ENCODE measurements at regions of chr2 and their contacts with region 1.

Region 1: DNA sequence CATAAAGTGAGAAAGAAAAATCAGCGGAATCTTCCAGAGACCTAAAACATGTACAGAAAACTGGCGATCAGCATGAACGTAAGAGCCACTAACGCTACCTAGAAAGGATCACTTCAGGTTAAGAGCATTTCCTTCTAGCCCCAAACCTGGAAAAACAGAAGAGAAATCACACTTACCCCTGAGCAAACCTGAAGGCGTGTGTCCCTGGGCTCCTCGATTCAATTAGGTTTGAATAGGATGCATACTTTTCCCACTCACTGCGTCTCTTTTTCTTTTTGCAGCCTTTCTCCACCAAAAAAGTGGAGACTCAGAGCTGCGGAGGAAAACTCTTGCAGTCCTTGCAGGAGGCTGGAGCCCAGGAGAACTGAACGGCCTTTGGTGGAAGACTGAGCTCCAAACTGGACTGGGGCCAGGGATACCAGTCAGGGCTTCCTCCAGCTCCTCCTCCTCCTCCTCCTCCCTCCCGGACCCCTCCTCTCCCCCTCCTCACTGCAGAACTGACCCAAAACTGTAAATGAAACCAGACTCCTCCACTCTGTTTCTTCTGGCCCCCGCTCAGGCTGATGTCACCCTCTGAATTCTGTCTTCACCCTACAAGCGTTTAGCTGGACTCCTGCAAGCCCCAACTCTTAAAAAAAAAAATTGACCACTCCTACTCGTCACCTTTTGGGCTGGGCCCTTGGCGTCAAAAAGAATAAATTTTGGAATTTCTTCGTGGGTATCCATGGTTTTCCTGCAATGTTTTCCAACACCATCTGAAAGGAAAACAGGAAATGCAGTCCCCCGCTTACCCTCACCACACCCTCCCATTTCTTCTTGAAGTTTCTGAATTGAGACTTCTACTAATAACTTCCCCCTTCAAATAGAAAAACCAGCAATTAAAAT is at the start of gene COL6A3:
- DNase-seq: no peak
- H3K4me3 Mint-ChIP-seq: no peak within 1 kb of the TSS
- H3K27ac Mint-ChIP-seq: no peak within 1 kb of the TSS
- H3K4me1 Mint-ChIP-seq: no peaks in the 10 kb centered on the region
- H3K27me3 Mint-ChIP-seq: peaks cover 83% of the 10 kb centered on the region
- CTCF ChIP-seq: no peak
- total RNA-seq, gene COL6A3: 0.07 TPM in 1 of 2 replicates, not detected in the other

Region 2: DNA sequence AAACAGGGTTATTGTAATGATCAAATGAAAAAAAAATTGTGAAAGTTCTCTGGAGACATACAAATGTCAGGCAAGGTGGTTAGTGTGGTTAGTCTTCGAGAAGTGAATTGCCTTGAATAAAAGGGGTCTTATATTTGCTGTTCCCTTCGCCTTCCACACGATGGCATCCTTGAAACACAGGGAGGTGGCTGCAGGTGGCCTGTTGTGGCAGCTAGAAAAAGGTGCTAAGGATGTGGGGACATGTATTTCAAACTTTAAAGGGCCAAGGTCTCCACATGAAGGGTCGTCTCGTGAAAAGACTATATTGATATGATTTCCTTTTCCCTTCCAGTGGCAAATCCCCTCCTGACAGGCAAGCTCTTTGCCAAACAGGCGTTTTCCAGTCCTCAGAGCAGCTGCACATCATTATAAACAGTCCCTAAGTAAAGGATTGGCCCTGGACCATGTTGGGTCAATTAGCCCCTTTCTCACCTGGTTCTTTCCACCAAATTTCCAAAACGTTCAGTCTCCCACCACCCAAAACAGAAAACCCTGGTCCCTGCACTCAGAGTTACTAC is 259.9 kb before region 1 on chr2:
- CTCF ChIA-PET with region 1: interaction called, 4 read pairs
- intact Hi-C with region 1: loop called (anchors 5 kb)
- DNase-seq: peak; percentile 73
- H3K4me3 Mint-ChIP-seq: no peak overlapping the region
- H3K27ac Mint-ChIP-seq: no peak overlapping the region
- H3K4me1 Mint-ChIP-seq: no peaks in the 10 kb centered on the region
- H3K27me3 Mint-ChIP-seq: peaks cover 15% of the 10 kb centered on the region
- CTCF ChIP-seq: peak; percentile 83

Region 3: GRCh38 chr2:237165405-237166276 is 248.4 kb before region 1 on chr2:
- CTCF ChIA-PET with region 1: interaction called, 12 read pairs
- intact Hi-C with region 1: no loop called
- DNase-seq: peak; percentile 52
- H3K4me3 Mint-ChIP-seq: no peak overlapping the region
- H3K27ac Mint-ChIP-seq: no peak overlapping the region
- H3K4me1 Mint-ChIP-seq: no peaks in the 10 kb centered on the region
- H3K27me3 Mint-ChIP-seq: peaks cover 48% of the 10 kb centered on the region
- CTCF ChIP-seq: peak; percentile 62

Region 4: GRCh38 chr2:237171396-237171795 is 242.6 kb before region 1 on chr2:
- CTCF ChIA-PET with region 1: no interaction called
- intact Hi-C with region 1: loop called (anchors 1 kb)
- DNase-seq: peak; percentile 21
- H3K4me3 Mint-ChIP-seq: no peak overlapping the region
- H3K27ac Mint-ChIP-seq: no peak overlapping the region
- H3K4me1 Mint-ChIP-seq: peaks cover 11% of the 10 kb centered on the region
- H3K27me3 Mint-ChIP-seq: peaks cover 22% of the 10 kb centered on the region
- CTCF ChIP-seq: peak; percentile 17